HEK293 (cell line): ENCODE measurements at regions of chr5 and their contacts with region 1.

Region 1: DNA sequence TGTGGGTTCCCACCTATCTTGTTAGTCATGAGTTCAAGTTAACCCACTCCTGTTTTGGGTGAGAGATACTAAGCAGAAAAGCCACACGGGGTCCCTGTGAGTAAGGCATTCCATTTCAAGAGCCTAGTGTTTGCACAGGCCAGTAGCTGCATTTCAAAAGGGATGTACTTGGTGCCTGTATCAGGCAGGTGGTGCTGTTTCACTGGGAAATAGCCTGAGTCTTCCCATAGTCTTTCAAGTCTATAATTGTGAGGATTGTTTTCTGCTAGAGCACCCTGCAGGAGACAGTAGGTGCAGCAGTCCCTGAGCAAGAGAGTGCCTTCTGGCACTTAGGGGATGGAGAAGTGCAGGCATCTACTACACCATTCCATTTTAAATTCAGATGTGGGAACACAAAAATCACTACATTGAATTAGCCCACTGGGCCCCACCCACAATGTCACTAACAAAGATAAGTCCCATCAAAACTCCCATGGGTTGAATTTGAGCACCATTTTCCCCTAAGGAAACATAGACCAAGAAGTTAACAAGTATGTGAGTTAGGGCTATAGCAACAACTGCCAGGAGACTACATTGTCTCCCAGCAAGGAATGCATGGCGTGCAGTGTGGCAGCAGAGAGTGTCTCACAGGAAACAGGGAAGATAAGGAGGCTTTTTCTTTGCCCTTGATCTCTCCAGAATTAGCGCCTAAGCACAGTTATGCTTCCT is 263.2 kb downstream of the COX7C start:
- H3K4me3 ChIP-seq: no peak overlapping the region
- H3K27ac ChIP-seq: no peak overlapping the region
- H3K4me1 ChIP-seq: no peaks in the 10 kb centered on the region
- CTCF ChIP-seq: peak; percentile 28; the same call in 1 of the 2 replicates

Region 2: DNA sequence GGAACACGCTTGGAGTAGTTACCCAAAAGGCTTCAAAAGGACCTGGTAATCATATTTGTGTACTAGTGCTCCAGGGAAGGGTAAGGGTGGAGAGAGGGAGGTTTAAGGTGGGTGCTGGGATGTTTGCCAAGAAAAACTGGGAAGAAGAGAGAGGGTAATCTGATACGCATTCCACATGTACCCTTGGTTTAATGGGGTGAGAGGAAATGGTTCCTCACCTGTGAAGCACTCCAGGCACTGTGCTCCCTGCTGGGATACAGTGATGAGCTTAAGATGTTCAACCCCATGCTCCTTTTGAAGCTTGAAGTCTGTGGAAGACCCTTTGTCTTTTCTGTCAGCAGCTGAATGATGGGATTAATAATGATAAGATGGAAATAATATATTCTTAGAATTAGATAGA is 164.8 kb before region 1 on chr5:
- CTCF ChIA-PET with region 1: no interaction called
- POLR2A ChIA-PET with region 1: no interaction called
- H3K4me3 ChIP-seq: no peak overlapping the region
- H3K27ac ChIP-seq: no peak overlapping the region
- H3K4me1 ChIP-seq: no peaks in the 10 kb centered on the region
- CTCF ChIP-seq: no peak

Region 3: DNA sequence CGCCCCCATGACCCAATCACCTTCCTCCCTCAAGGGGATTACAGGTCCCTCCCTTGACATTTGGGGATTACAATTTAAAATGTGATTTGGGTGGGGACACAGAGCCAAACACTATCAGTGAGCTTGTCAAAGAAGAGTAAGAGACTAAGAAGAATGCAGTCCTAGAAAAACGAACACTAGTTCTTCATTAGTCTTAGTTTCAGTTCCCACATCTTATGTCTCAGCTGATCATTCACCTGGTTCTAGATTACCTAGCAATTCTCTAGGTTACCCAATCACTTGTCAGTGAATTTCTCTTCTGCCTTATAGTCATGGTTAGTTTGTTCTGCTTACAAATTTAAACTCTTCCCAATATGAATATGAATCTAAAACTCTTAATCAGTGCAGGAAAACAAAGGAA is 11.7 kb before region 1 on chr5:
- CTCF ChIA-PET with region 1: interaction called, 11 read pairs
- POLR2A ChIA-PET with region 1: no interaction called
- H3K4me3 ChIP-seq: no peak overlapping the region
- H3K27ac ChIP-seq: no peak overlapping the region
- H3K4me1 ChIP-seq: no peaks in the 10 kb centered on the region
- CTCF ChIP-seq: no peak

Region 4: DNA sequence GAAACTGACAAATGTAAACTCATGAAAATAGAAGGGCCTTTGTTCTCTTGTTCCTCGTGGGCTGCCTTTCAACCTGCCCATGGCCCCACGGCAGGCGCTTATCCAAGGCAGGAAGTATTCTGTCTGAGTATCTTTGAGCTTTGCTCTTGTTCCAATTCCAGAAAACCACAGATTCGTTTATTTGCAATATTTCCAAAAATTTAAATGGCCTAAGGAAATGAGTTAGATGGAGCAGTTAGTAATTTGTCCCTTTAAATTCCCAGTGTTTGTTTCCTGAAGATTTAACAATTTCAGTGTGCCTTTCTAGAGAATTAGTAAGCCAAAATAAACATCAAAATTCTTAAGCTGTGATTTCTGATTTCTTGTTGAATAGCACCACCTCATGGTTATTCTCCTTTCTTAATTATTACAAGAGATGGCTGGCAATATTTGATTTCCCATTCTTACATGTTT is 87.4 kb after region 1 on chr5:
- CTCF ChIA-PET with region 1: interaction called, 81 read pairs
- POLR2A ChIA-PET with region 1: interaction called, 3 read pairs
- H3K4me3 ChIP-seq: no peak overlapping the region
- H3K27ac ChIP-seq: no peak overlapping the region
- H3K4me1 ChIP-seq: no peaks in the 10 kb centered on the region
- CTCF ChIP-seq: peak; percentile 23; the same call in 1 of the 2 replicates

Region 5: DNA sequence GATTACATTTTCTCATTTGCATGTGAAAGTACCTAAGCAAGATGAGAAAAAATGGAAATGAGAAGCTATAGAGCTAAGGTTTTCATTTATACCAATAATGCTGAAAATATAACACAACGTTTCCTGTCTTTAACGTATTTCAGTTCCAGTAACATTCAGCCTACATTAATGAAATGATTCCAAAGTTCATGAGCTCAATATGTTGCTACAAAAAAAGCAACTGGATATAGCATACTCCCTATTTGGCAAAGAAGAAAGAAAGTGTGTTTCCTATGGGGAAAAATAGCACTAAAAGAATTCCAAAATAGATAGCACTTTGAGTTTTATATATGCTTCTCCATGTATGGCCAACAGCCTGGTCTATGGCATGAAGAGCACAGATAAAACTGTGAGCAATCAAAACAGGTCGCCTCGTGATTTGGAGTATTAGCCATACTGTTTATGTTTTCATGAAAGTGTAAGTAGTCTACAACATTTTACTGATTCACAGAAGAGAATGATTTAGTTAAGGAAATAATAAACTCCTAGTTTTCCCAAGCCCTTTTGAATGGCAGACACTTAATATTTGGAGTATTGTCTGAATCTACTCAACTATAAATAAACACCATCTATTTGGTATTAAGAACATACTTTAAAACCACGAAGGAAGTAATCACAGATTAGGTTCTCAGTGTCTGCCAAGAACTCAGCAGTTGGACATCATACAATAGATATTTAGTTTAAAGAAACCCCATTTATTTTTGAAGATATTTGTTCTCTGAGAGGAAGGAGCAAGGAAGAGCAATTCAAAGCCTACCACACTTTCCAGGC is 128.0 kb after region 1 on chr5:
- CTCF ChIA-PET with region 1: interaction called, 26 read pairs
- POLR2A ChIA-PET with region 1: no interaction called
- H3K4me3 ChIP-seq: no peak overlapping the region
- H3K27ac ChIP-seq: no peak overlapping the region
- H3K4me1 ChIP-seq: no peaks in the 10 kb centered on the region
- CTCF ChIP-seq: no peak

Region 6: GRCh38 chr5:87020099-87020934 is 139.4 kb after region 1 on chr5:
- CTCF ChIA-PET with region 1: interaction called, 26 read pairs
- POLR2A ChIA-PET with region 1: no interaction called
- H3K4me3 ChIP-seq: no peak overlapping the region
- H3K27ac ChIP-seq: no peak overlapping the region
- H3K4me1 ChIP-seq: 0 out of 2 replicates have a peak, but pooled peaks cover 2% of the 10 kb centered on the region
- CTCF ChIP-seq: no peak